B cell (primary cell): ENCODE measurements at regions of chr16 and their contacts with region 1.

Region 1: DNA sequence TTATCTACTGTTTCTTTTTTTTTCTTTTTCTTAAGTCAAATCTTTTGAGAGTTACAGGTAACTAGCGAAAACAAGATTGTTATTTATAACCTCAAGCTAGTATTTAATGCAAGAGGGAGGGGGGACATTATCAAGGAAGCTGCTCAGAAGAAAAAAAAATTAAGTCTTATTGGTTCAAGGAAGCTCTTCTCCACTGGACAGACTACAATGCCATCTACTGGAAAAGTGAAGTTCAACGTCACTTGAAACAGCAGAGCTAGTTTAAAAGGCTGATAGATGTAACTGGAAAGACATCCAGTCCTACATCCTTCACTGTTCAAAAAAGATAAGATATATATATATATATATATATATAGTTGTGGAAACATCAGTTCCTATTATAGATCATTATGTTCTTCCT is 418.0 kb upstream of the PSMD7 start:
- DNase-seq: peak; percentile 18
- ATAC-seq: no peak
- H3K4me3 ChIP-seq: no peak overlapping the region
- H3K4me3 Mint-ChIP-seq: no peak overlapping the region
- H3K27ac ChIP-seq: no peak overlapping the region
- H3K27ac Mint-ChIP-seq: no peak overlapping the region
- H3K4me1 ChIP-seq: no peaks in the 10 kb centered on the region
- H3K4me1 Mint-ChIP-seq: no peaks in the 10 kb centered on the region
- H3K27me3 ChIP-seq: no peaks in the 10 kb centered on the region
- H3K27me3 Mint-ChIP-seq: peaks cover 3% of the 10 kb centered on the region
- CTCF ChIP-seq: peak; percentile 37

Region 2: DNA sequence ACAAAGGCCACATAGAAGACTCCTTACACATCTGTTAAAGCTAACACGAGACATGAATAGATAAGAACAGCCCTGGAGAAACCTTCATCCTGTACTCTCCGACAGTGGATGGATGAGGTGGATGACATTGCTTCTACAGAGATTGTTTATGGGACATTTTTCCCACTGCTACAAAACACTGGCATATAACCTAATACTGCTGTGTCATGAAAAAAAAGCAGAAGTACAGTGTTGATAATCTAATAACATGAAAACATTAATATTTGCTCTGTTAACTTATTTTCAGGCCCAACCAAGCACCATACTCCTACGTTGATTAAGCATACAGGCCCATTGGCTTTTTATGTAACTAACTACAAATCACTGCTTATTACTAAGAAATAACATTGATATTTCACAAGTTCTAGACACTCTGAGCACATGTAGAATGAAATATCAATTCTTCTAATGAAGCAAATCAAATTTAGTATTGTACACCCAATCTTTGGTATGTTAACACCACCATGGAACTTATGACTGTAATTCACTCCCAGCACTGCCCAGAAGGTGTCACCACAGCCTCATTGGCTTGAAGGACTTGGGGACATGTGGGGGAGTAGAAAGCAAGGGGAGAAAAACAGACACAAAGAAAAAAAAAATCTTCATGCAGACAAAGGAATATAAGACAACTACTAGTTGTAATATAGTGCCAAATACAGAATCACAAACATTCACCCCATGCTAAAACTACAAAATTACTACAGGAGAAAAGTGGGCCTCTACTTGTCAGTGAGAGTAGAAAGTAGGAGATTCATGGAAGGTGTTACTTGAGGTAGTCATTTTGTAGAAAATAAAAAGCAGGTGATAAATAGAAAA is 1376.6 kb before region 1 on chr16:
- CTCF ChIA-PET with region 1: interaction called, 7 read pairs
- POLR2A ChIA-PET with region 1: no interaction called
- intact Hi-C with region 1: loop called (anchors 5 kb)
- DNase-seq: peak; percentile 60
- ATAC-seq: peak; percentile 36
- H3K4me3 ChIP-seq: no peak overlapping the region
- H3K4me3 Mint-ChIP-seq: no peak overlapping the region
- H3K27ac ChIP-seq: no peak overlapping the region
- H3K27ac Mint-ChIP-seq: no peak overlapping the region
- H3K4me1 ChIP-seq: no peaks in the 10 kb centered on the region
- H3K4me1 Mint-ChIP-seq: peaks cover 2% of the 10 kb centered on the region
- H3K27me3 ChIP-seq: no peaks in the 10 kb centered on the region
- H3K27me3 Mint-ChIP-seq: no peaks in the 10 kb centered on the region
- CTCF ChIP-seq: peak; percentile 78